ENCODE measurements at regions of chr1 and their contacts with region 1.

Region 1: GRCh38 chr1:1758692-1759455 is 19.4 kb downstream of the NADK start:
- DNase-seq: peak; percentile 62
- H3K4me3 ChIP-seq: no peak overlapping the region
- H3K27ac ChIP-seq: no peak overlapping the region
- H3K4me1 ChIP-seq: peaks cover 15% of the 10 kb centered on the region
- H3K27me3 ChIP-seq: no peaks in the 10 kb centered on the region
- CTCF ChIP-seq: no peak

Region 2: GRCh38 chr1:1687846-1688245 is 71.0 kb before region 1 on chr1:
- CTCF ChIA-PET with region 1: no interaction called
- dilution Hi-C with region 1: loop called (anchors 5 kb)
- in situ Hi-C with region 1: no loop called
- intact Hi-C with region 1: no loop called
- DNase-seq: no peak
- H3K4me3 ChIP-seq: no peak overlapping the region
- H3K27ac ChIP-seq: no peak overlapping the region
- H3K4me1 ChIP-seq: peaks cover 14% of the 10 kb centered on the region
- H3K27me3 ChIP-seq: no peaks in the 10 kb centered on the region
- CTCF ChIP-seq: no peak

Region 3: DNA sequence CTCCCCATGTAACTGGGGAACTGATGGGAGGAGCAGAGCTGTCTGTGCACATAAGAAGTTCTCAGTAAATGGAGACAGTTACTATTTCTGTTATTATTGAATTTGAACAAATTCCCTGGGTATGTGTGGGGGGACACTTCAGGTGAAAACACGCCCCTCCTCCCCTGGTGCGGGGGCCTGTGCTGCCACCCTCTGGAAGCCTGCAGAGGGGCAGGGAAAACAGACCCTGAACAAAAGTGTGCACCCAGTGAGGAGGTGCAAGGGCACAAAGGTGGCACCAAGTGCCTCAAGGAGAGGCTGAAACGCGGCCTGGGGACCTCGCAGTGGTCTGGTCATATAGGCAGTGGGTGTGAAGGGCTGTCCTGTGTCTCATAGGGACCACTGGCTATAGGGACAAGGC is 37.6 kb after region 1 on chr1:
- CTCF ChIA-PET with region 1: no interaction called
- dilution Hi-C with region 1: loop called (anchors 5 kb)
- in situ Hi-C with region 1: no loop called
- intact Hi-C with region 1: no loop called
- DNase-seq: no peak
- H3K4me3 ChIP-seq: no peak overlapping the region
- H3K27ac ChIP-seq: no peak overlapping the region
- H3K4me1 ChIP-seq: no peaks in the 10 kb centered on the region
- H3K27me3 ChIP-seq: no peaks in the 10 kb centered on the region
- CTCF ChIP-seq: peak in 1 of 2 donors; percentile 15

Region 4: DNA sequence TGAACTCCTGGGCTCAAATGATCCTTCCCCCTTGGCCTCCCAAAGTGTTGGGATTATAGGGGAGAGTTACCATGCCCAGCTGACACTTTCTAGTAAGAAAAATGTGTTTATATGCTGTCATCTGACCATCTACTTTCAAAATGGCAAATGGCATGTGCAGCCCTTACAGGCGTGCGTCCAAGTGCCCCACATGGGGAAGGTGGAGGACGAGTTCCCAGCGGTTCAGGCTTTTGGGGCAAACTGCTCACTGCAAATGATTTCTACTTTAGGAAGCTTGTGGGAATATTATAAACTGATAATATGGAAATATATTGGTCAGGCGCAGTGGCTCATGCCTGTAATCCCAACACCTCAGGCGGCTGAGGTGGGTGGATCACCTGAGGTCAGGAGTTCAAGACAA is 60.9 kb after region 1 on chr1:
- CTCF ChIA-PET with region 1: no interaction called
- dilution Hi-C with region 1: loop called (anchors 5 kb)
- in situ Hi-C with region 1: no loop called
- intact Hi-C with region 1: no loop called
- DNase-seq: no peak
- H3K4me3 ChIP-seq: no peak overlapping the region
- H3K27ac ChIP-seq: no peak overlapping the region
- H3K4me1 ChIP-seq: no peaks in the 10 kb centered on the region
- H3K27me3 ChIP-seq: no peaks in the 10 kb centered on the region
- CTCF ChIP-seq: no peak

Measured in mammary epithelial cell (primary cell).